WTC11 (cell line): ENCODE measurements at regions of chr15 and their contacts with region 1.

Region 1: DNA sequence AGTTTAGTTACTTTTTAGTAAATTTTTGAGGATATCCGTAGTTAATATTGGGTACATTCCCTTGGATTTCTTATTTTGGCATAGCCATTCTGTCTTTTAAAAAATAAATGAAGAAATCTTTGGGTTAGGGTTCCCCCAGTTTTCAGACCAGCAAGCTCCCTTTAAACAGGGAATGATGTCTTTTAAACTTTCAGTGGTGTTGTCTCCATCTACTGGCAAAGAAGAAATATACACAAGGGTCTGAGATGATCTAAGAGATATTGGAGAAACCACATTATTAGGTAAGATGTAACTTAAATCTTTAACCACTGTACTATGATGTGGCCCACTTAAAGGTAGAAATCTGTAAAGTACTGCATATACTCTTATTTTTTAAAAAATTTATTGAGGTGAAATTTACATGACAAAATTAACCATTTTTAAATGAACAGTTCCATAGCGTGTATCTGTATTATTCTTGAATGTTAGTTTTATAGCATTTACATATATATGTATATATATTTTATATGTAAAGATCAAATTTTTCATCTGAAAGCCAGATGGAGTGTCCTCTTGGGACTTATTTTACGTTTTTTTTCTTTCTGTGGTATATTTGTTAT is 35.1 kb upstream of the EIF3J start:
- DNase-seq: no peak
- ATAC-seq: peak; percentile 63; the same call in 1 of the 2 replicates
- H3K4me3 Mint-ChIP-seq: no peak overlapping the region
- H3K27ac Mint-ChIP-seq: peak overlapping the region; percentile 15; the same call in 1 of the 2 replicates
- H3K4me1 Mint-ChIP-seq: no peaks in the 10 kb centered on the region
- H3K27me3 Mint-ChIP-seq: no peaks in the 10 kb centered on the region
- CTCF ChIP-seq: no peak

Region 2: GRCh38 chr15:43903864-43904290 is 598.0 kb before region 1 on chr15:
- CTCF ChIA-PET with region 1: interaction called, 12 read pairs
- POLR2A ChIA-PET with region 1: no interaction called
- DNase-seq: peak; percentile 83
- ATAC-seq: peak; percentile 96
- H3K4me3 Mint-ChIP-seq: no peak overlapping the region
- H3K27ac Mint-ChIP-seq: no peak overlapping the region; the same call in 1 of the 2 replicates
- H3K4me1 Mint-ChIP-seq: peaks cover 17% of the 10 kb centered on the region
- H3K27me3 Mint-ChIP-seq: no peaks in the 10 kb centered on the region
- CTCF ChIP-seq: peak; percentile 91

Region 3: GRCh38 chr15:44319385-44319784 is 182.5 kb before region 1 on chr15:
- CTCF ChIA-PET with region 1: interaction called, 11 read pairs
- POLR2A ChIA-PET with region 1: no interaction called
- DNase-seq: peak; percentile 14
- ATAC-seq: peak; percentile 57
- H3K4me3 Mint-ChIP-seq: no peak overlapping the region
- H3K27ac Mint-ChIP-seq: no peak overlapping the region
- H3K4me1 Mint-ChIP-seq: peaks cover 11% of the 10 kb centered on the region
- H3K27me3 Mint-ChIP-seq: no peaks in the 10 kb centered on the region
- CTCF ChIP-seq: no peak

Region 4: GRCh38 chr15:44325568-44325967 is 176.3 kb before region 1 on chr15:
- CTCF ChIA-PET with region 1: interaction called, 11 read pairs
- POLR2A ChIA-PET with region 1: no interaction called
- DNase-seq: no peak
- ATAC-seq: peak; percentile 92
- H3K4me3 Mint-ChIP-seq: no peak overlapping the region
- H3K27ac Mint-ChIP-seq: peak overlapping the region; percentile 55; the same call in 1 of the 2 replicates
- H3K4me1 Mint-ChIP-seq: peaks cover 12% of the 10 kb centered on the region
- H3K27me3 Mint-ChIP-seq: no peaks in the 10 kb centered on the region
- CTCF ChIP-seq: no peak

Region 5: DNA sequence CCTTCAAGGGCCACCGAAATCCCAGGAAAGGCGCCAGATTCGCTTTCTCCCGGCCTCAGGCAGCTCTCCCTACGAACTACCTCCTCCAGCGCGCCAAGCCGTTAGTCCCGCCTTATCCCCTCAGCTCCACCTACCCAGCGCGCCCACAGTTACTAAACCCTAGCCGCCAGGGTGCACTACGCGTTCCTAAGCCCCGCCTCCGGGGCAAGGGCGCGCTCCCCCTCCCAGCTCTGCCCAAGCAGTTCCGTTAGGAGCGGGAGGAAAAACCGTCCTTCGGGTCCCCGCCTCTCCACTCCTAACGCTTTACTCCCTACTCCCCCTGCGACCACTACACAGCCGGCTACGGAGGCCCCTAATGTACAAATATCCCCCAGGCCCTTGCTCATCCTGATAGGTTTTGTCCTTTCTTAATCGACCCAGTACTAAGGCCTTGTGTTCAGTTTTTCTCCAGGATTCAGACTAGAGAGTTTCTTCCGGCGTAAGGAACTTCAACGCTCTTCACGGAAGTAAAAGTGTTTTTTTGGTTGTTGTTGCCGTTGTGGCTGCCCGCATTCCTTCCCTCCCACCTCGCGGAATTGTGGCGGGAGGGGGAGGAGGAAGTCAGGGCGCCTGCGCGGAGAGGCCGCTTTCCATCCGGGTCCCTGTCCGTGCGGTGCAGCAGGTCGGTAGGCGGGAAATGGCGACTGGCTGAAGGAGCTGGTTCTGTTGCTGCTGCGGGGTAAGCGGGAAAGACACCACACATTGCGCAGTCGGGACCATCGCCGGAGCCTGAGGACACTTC is 74.7 kb before region 1 on chr15 and contains the start of gene CTDSPL2:
- CTCF ChIA-PET with region 1: interaction called, 26 read pairs
- POLR2A ChIA-PET with region 1: interaction called, 3 read pairs
- DNase-seq: peak; percentile 98
- ATAC-seq: peak; percentile 98
- H3K4me3 Mint-ChIP-seq: peak within 1 kb of the TSS; percentile 95
- H3K27ac Mint-ChIP-seq: peak within 1 kb of the TSS; percentile 100
- H3K4me1 Mint-ChIP-seq: peaks cover 19% of the 10 kb centered on the region
- H3K27me3 Mint-ChIP-seq: no peaks in the 10 kb centered on the region; the same call in 1 of the 2 replicates
- CTCF ChIP-seq: no peak
- total RNA-seq, gene CTDSPL2: 56.8 to 65.2 TPM (median 61.8 TPM) in 3 replicates

Region 6: DNA sequence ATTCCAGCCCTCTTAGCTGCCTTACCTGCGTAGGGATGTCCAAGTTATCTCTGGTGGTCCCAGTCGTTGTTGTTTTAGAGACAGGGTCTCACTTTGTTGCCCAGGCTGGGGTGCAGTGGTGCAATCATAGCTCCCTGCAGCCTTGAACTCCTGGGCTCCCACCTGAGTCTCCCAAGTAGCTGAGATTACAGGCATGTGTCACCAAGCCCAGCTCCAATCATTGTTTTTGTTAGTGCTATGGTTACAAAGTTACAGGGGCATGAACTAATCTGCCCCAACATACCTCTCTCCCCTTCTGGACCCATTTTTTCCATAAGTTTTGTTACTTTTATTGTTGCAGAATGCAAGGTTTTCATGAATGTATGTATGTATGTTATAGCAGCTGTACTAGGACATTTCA is 19.8 kb before region 1 on chr15:
- CTCF ChIA-PET with region 1: interaction called, 15 read pairs
- POLR2A ChIA-PET with region 1: no interaction called
- DNase-seq: no peak
- ATAC-seq: no peak
- H3K4me3 Mint-ChIP-seq: no peak overlapping the region
- H3K27ac Mint-ChIP-seq: peak overlapping the region; percentile 83
- H3K4me1 Mint-ChIP-seq: 0 out of 2 replicates have a peak, but pooled peaks cover 2% of the 10 kb centered on the region
- H3K27me3 Mint-ChIP-seq: no peaks in the 10 kb centered on the region
- CTCF ChIP-seq: no peak

Region 7: DNA sequence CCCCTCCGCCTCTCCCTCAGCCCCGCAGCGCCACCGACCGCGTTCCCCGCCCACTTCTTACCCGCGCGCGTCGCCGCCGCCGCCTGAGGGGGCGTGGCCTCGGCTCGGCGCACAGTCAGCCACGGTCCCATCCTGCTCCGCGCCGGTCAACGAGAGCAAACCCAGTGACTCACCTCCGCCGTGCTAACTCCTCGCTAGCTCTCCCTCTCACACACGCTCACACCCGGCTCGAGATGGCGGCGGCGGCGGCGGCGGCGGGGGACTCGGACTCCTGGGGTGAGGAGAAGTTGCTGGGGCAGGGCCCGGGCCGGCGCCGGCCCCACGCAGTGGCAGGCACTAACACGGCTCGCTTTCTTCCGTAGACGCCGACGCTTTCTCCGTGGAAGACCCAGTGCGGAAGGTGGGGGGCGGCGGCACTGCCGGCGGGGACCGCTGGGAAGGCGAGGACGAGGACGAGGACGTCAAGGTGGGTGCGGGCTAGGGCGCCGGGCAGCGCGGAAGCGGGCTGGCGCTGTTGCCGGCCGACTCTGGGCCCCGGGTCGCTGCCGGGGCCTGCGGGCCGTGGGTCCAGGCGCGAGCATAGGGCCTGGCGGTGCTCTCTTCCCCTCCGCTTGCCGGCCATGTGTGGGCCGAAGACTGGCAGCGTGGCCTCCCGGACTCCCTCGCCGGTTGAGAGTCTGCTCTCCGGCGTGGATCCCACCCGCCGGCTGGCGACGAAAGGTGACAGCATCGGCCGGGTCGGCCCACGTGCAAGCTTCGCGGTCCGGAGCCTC is 35.3 kb after region 1 on chr15 and contains the start of gene EIF3J:
- CTCF ChIA-PET with region 1: interaction called, 11 read pairs
- POLR2A ChIA-PET with region 1: no interaction called
- DNase-seq: peak; percentile 90
- ATAC-seq: peak; percentile 90
- H3K4me3 Mint-ChIP-seq: peak within 1 kb of the TSS; percentile 89
- H3K27ac Mint-ChIP-seq: peak within 1 kb of the TSS; percentile 99
- H3K4me1 Mint-ChIP-seq: peaks cover 24% of the 10 kb centered on the region
- H3K27me3 Mint-ChIP-seq: no peaks in the 10 kb centered on the region
- CTCF ChIP-seq: no peak
- total RNA-seq, gene EIF3J: 74.9 to 78.6 TPM (median 76.1 TPM) in 3 replicates